ENCODE measurements at regions of chr6 and their contacts with region 1.

Region 1: GRCh38 chr6:105824732-105825131 is 261.4 kb upstream of the PRDM1 start:
- DNase-seq: peak; percentile 33
- H3K4me3 ChIP-seq: no peak overlapping the region
- CTCF ChIP-seq: no peak

Region 2: DNA sequence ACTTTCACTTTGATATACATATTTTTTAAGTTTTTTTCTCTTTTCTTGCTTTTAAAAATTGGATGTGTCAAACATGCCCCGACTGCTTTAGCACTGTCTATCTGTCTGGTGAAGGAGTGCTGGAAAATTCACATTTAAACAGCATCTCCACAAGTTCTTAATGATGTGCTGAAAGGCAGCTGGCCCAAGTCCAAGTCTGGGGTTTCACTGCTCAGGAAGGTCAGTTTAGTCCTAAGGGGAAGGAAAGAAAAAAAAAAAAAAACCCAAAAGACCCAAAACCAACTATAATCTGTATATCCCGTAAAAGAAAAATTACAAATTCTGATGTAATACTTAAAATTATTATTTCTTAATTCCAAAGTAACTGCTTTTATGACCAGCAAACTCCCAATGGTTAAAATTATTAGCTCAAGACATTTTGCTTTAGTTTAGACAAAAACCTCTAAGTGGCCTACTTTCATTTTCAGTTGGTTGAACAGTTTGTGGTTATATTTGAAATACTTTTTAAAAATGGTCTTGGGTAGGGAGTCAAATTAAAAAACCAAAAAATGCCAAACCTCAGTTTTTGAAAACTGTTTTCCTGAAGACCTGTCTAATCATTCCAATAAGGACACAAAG is 342.4 kb before region 1 on chr6:
- CTCF ChIA-PET with region 1: no interaction called
- POLR2A ChIA-PET with region 1: no interaction called
- DNase-seq: no peak
- H3K4me3 ChIP-seq: no peak overlapping the region
- CTCF ChIP-seq: no peak

Region 3: GRCh38 chr6:105648276-105648675 is 176.5 kb before region 1 on chr6:
- CTCF ChIA-PET with region 1: no interaction called
- POLR2A ChIA-PET with region 1: no interaction called
- DNase-seq: no peak
- H3K4me3 ChIP-seq: no peak overlapping the region
- CTCF ChIP-seq: no peak

Region 4: GRCh38 chr6:105713474-105714118 is 111.1 kb before region 1 on chr6:
- CTCF ChIA-PET with region 1: no interaction called
- POLR2A ChIA-PET with region 1: no interaction called
- DNase-seq: no peak
- H3K4me3 ChIP-seq: no peak overlapping the region
- CTCF ChIP-seq: no peak

Region 5: DNA sequence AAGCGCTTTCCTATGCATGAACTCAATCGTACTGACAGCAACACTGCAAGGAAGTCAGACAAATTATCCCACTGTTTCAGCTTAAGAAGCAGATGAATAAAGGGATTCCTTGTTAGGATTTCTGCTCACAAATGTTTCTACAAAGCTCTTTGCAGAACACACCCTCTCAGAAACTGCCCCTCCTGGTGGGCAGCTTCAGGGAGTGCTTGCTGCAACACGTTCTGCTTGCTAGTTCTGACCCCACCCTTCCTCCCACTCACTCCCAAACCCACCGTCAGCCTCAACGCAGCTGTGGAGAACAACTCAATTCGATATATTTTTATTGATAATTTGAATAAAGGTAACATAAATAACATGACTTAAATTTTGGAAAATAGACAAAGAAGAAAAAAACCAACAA is 10.6 kb after region 1 on chr6:
- CTCF ChIA-PET with region 1: interaction called, 10 read pairs
- POLR2A ChIA-PET with region 1: no interaction called
- DNase-seq: no peak
- H3K4me3 ChIP-seq: no peak overlapping the region
- CTCF ChIP-seq: peak; percentile 39

Measured in AG04449 (cell line).